ENCODE measurements at regions of chr16 and their contacts with region 1.

Region 1: GRCh38 chr16:11915644-11916523 is at the start of gene GSPT1:
- DNase-seq: peak; percentile 99
- H3K4me3 ChIP-seq: peak within 1 kb of the TSS; percentile 74 to 86
- H3K27ac ChIP-seq: peak within 1 kb of the TSS; percentile 91
- H3K4me1 ChIP-seq: peaks cover 44% of the 10 kb centered on the region
- H3K27me3 ChIP-seq: no peaks in the 10 kb centered on the region
- CTCF ChIP-seq: peak in 1 of 3 experiments; percentile 3
- POLR2A ChIP-seq: peak in 1 of 2 donors; percentile 94
- total RNA-seq, gene GSPT1: 56.0 TPM

Region 2: GRCh38 chr16:11597239-11598101 is 318.4 kb before region 1 on chr16:
- intact Hi-C with region 1: no loop called
- DNase-seq: no peak
- H3K4me3 ChIP-seq: peak overlapping the region in 1 of 2 donors; percentile 20
- H3K27ac ChIP-seq: peak overlapping the region; percentile 85
- H3K4me1 ChIP-seq: peaks cover 33% of the 10 kb centered on the region
- H3K27me3 ChIP-seq: no peaks in the 10 kb centered on the region
- CTCF ChIP-seq: no peak
- POLR2A ChIP-seq: no peak

Region 3: GRCh38 chr16:11851294-11852091 is 64.4 kb before region 1 on chr16 and contains the start of gene RSL1D1:
- intact Hi-C with region 1: loop called (anchors 10 kb)
- DNase-seq: peak; percentile 92 to 98
- H3K4me3 ChIP-seq: peak within 1 kb of the TSS; percentile 92 to 94
- H3K27ac ChIP-seq: peak within 1 kb of the TSS; percentile 82
- H3K4me1 ChIP-seq: peaks cover 53% of the 10 kb centered on the region
- H3K27me3 ChIP-seq: no peaks in the 10 kb centered on the region
- CTCF ChIP-seq: no peak
- POLR2A ChIP-seq: peak in 1 of 2 donors; percentile 80
- total RNA-seq, gene RSL1D1: 148 TPM